Esophagus muscularis mucosa (tissue), 4 donors: ENCODE measurements at regions of chr9 and their contacts with region 1.

Region 1: GRCh38 chr9:83920927-83921707 is at the start of gene KIF27:
- DNase-seq: peak; percentile 98
- H3K4me3 ChIP-seq: peak within 1 kb of the TSS; percentile 79 to 100 (median 85)
- H3K27ac ChIP-seq: peak within 1 kb of the TSS; percentile 97 to 100 (median 98)
- H3K4me1 ChIP-seq: peaks cover 3 to 17% (median 16%) of the 10 kb centered on the region in 4 donors
- H3K27me3 ChIP-seq: no peaks in the 10 kb centered on the region
- CTCF ChIP-seq: peak; percentile 19 to 57 (median 53)
- EP300 ChIP-seq: no peak
- POLR2A ChIP-seq: peak; percentile 6
- total RNA-seq, gene KIF27: 3.9 to 5.4 (median 4.5) TPM

Region 2: GRCh38 chr9:83622939-83623678 is 298.0 kb before region 1 on chr9 and contains the start of gene IDNK:
- intact Hi-C with region 1: loop called (anchors 5 kb)
- DNase-seq: no peak
- H3K4me3 ChIP-seq: peak within 1 kb of the TSS; percentile 79 to 97 (median 94)
- H3K27ac ChIP-seq: peak within 1 kb of the TSS; percentile 87 to 92 (median 88)
- H3K4me1 ChIP-seq: peaks cover 6 to 19% (median 15%) of the 10 kb centered on the region in 4 donors
- H3K27me3 ChIP-seq: no peaks in the 10 kb centered on the region
- CTCF ChIP-seq: no peak
- EP300 ChIP-seq: no peak
- POLR2A ChIP-seq: no peak
- total RNA-seq, gene IDNK: 4.6 to 9.3 (median 5.9) TPM

Region 3: GRCh38 chr9:83707768-83708514 is 213.2 kb before region 1 on chr9 and contains the start of gene UBQLN1:
- intact Hi-C with region 1: loop called (anchors 5 kb)
- DNase-seq: peak; percentile 98
- H3K4me3 ChIP-seq: peak within 1 kb of the TSS; percentile 87 to 97 (median 90)
- H3K27ac ChIP-seq: peak within 1 kb of the TSS; percentile 97 to 99 (median 98)
- H3K4me1 ChIP-seq: peaks cover 23 to 42% (median 40%) of the 10 kb centered on the region in 4 donors
- H3K27me3 ChIP-seq: no peaks in the 10 kb centered on the region
- CTCF ChIP-seq: no peak
- EP300 ChIP-seq: no peak
- POLR2A ChIP-seq: peak; percentile 96
- total RNA-seq, gene UBQLN1: 112 to 123 (median 119) TPM